HepG2 (cell line): ENCODE measurements at regions of chr4 and their contacts with region 1.

Region 1: GRCh38 chr4:1072830-1073446 is 40.4 kb downstream of the RNF212 start:
- DNase-seq: peak; percentile 72
- ATAC-seq: peak; percentile 98
- H3K4me3 ChIP-seq: no peak overlapping the region
- H3K27ac ChIP-seq: no peak overlapping the region
- H3K4me1 ChIP-seq: peaks cover 11% of the 10 kb centered on the region
- H3K27me3 ChIP-seq: peaks cover 1 to 49% of the 10 kb centered on the region in 2 experiments; a peak in 3 of 5 replicates
- CTCF ChIP-seq: peak; percentile 85
- EP300 ChIP-seq: no peak
- POLR2A ChIP-seq: no peak
- RAD21 ChIP-seq: peak; percentile 37; the same call in 1 of the 2 replicates

Region 2: DNA sequence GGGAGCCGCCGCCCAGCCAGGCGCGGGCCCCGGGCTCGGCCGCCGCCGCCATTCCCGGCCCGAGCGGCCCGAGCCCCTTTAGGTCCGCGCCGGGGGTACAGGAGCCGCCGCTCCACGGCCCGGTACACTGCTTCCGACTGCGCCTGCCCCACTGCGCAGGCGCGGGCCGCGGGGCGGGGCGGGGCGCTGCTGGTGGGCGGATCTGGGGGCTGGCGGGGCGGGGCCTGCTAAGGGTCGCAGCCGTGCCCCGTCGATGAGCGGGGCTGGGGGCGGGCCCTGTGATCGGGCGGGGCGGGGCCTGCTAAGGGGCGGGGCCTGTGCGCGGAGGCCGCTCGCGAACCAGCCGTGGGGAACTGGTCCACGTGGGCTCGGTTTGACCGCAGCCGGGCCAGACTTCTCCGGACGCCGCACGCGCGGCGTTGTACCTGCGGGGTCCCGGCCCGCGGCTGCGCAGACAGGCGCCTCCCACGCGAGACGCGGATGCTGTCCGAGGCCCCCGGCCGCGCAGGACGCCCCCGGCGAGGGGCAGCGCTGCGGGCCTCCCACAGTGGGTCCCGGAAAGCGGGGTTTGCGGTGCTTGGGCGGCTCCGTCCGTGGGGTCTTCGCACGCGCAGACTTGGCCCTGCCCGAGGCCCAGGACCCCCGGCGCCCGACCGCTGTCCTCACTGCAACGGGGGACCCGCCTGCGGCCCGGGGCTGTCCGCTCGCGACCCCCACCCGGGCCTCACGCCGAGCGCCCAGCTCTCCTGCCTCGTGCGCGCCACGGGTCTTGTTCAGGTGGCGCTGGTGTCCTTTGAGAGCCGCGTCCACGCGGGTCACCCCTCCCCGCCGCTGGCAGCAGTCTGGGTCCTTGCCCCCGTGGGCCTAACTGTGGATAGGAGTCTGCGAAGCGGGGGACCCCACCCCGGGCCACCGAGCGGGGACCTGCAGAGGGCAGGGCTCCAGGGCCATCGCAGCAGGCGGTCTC is 99.2 kb before region 1 on chr4 and contains the start of gene DGKQ:
- CTCF ChIA-PET with region 1: no interaction called
- POLR2A ChIA-PET with region 1: no interaction called
- in situ Hi-C with region 1: no loop called
- intact Hi-C with region 1: no loop called
- DNase-seq: peak; percentile 48
- ATAC-seq: peak; percentile 67
- H3K4me3 ChIP-seq: peak within 1 kb of the TSS; percentile 74 to 87 (median 81)
- H3K27ac ChIP-seq: no peak within 1 kb of the TSS
- H3K4me1 ChIP-seq: peaks cover 21% of the 10 kb centered on the region
- H3K27me3 ChIP-seq: peaks cover 0 to 3% of the 10 kb centered on the region in 2 experiments; a peak in 2 of 5 replicates
- CTCF ChIP-seq: no peak
- EP300 ChIP-seq: no peak
- POLR2A ChIP-seq: no peak
- RAD21 ChIP-seq: no peak
- total RNA-seq, gene DGKQ: 3.2 and 7.2 TPM in 2 replicates

Region 3: DNA sequence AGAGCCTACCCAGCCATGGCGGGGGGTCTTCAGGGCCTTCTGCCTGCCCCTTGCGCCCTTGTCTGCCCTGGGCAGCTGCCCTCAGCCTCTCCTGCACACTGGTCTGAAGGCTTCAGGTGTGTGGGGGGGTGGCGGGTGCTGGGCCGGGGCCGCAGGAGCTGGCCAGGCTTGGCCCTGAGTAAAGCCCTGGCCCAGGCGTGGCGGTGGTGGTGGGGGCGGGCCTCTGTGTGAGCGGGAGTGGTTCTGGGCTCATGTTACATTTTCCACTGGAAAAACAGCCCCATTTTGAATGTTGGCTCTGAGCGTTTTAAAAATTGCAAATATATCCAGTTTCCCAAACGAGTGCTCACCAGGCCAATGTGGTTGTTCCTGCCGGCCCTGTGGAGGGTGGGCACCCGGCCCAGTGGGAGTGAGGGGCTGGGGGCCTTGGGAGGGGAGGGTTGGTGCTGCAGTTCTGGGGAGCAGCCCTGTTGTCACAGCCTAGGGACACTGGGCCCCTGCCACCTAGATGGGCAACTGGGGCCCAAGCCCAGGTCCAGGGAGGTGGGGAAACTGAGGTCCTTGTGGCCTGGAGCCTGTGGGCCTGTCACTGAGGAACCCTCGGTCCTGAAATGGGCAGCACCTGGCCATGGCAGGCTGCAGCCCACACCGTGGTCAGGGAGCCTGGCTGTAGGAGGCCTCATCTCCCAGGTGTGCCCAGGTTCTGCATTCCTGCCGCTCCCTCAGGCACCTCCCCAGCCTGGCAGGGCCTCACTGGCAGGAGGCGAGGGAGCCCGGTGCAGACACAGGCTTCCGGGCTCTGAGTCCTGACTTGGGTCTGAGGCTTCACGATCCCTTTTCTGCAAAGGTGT is 33.2 kb before region 1 on chr4:
- CTCF ChIA-PET with region 1: no interaction called
- POLR2A ChIA-PET with region 1: no interaction called
- in situ Hi-C with region 1: no loop called
- intact Hi-C with region 1: loop called (anchors 5 kb)
- DNase-seq: no peak
- ATAC-seq: peak; percentile 33
- H3K4me3 ChIP-seq: peak overlapping the region in 1 of 3 experiments; percentile 14; a peak in 1 of 6 replicates
- H3K27ac ChIP-seq: no peak overlapping the region
- H3K4me1 ChIP-seq: peaks cover 78% of the 10 kb centered on the region
- H3K27me3 ChIP-seq: peaks cover 17 to 72% of the 10 kb centered on the region in 2 experiments
- CTCF ChIP-seq: no peak
- EP300 ChIP-seq: no peak
- POLR2A ChIP-seq: no peak
- RAD21 ChIP-seq: no peak